ENCODE measurements at regions of chr20 and their contacts with region 1.

Region 1: GRCh38 chr20:10476319-10476724 is 41.2 kb downstream of the SLX4IP start:
- DNase-seq: no peak
- H3K4me3 Mint-ChIP-seq: no peak overlapping the region
- H3K27ac Mint-ChIP-seq: no peak overlapping the region
- H3K4me1 Mint-ChIP-seq: peaks cover 5% of the 10 kb centered on the region
- H3K27me3 Mint-ChIP-seq: no peaks in the 10 kb centered on the region

Region 2: GRCh38 chr20:10487142-10488136 is 11.1 kb after region 1 on chr20:
- intact Hi-C with region 1: no loop called
- DNase-seq: no peak
- H3K4me3 Mint-ChIP-seq: no peak overlapping the region
- H3K27ac Mint-ChIP-seq: no peak overlapping the region
- H3K4me1 Mint-ChIP-seq: peaks cover 12% of the 10 kb centered on the region
- H3K27me3 Mint-ChIP-seq: no peaks in the 10 kb centered on the region

Region 3: GRCh38 chr20:10511509-10512251 is 35.4 kb after region 1 on chr20:
- intact Hi-C with region 1: loop called (anchors 5 kb)
- DNase-seq: peak; percentile 90
- H3K4me3 Mint-ChIP-seq: peak overlapping the region; percentile 50
- H3K27ac Mint-ChIP-seq: peak overlapping the region; percentile 82
- H3K4me1 Mint-ChIP-seq: peaks cover 38% of the 10 kb centered on the region
- H3K27me3 Mint-ChIP-seq: peaks cover 3% of the 10 kb centered on the region